ENCODE measurements at regions of chr19 and their contacts with region 1.

Region 1: DNA sequence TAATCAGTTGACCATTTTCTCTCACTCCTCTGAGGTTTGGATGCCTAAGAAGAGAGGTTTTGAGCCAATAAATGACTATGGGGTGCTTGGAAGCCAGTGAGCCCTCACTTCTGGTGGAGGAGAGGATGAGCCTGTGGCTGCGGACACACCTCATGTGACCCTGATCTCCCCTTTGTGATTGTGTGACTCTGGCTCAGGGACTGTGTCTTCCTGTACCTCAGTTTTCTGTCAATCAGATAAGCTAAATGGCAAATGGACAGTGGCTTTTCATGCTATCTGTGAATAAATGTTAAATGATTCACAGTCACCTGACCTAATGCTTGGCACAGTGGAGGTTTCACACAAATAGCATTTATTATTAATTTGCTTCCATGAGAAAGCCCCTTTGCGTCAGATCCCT is 2.7 kb downstream of the PSG8 start:
- DNase-seq: no peak
- H3K4me3 Mint-ChIP-seq: no peak overlapping the region
- H3K27ac Mint-ChIP-seq: no peak overlapping the region
- H3K4me1 Mint-ChIP-seq: peaks cover 15% of the 10 kb centered on the region
- H3K27me3 Mint-ChIP-seq: no peaks in the 10 kb centered on the region

Region 2: DNA sequence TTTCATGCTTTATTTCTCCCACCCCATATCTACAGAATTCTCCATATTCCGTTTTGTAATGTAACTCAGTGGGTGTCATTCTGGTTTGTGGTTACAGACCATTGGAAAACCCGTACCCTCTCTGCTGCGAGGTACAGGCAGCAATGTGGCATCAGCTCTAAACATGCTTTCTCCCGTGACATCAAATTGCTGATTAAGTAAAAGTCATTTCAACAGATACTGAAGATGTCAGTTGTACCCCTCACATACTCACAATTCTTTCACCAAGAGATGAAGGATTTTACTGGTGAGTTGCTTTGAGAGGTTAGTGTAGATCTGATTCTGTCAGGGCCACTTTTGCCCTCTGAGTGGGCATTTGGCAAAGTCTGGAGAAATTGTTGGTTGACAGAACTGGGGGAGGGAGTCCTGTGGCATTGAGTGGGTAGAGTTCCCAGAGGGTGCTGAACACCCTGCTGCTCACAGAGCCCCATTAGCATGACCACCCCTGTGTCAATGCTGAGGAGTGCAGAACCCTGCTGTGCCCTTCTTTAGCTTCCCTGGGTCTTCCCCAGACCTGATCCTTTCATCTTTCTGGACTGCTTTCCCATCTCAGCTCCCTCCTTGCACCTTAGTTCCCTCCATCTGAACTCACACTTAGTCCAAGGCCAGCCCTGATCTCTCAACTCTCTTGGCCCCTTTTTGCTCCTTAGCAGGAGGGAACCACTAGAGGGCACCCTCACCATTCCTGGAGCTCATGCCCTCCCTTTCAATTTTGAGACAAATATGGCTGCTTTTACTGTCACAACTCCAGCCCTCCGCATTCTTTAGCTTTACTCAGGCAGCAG is 128.2 kb before region 1 on chr19:
- intact Hi-C with region 1: loop called (anchors 10 kb)
- DNase-seq: peak; percentile 39
- H3K4me3 Mint-ChIP-seq: no peak overlapping the region
- H3K27ac Mint-ChIP-seq: peak overlapping the region; percentile 75
- H3K4me1 Mint-ChIP-seq: peaks cover 23% of the 10 kb centered on the region
- H3K27me3 Mint-ChIP-seq: peaks cover 5% of the 10 kb centered on the region

Measured in activated T-helper 2 cell treated with anti-CD3 and anti-CD28 coated beads, Interferon-gamma antibody, Interleukin-2, Interleukin-4, amounts not matched to agents 10 μg/mL and 5 μg/mL and 100 μg/mL, durations not matched to agents 14 hours and 24 hours and 36 hours (primary cell).